CD4-positive, alpha-beta T cell (primary cell): ENCODE measurements at regions of chr15 and their contacts with region 1.

Region 1: GRCh38 chr15:70362886-70363285 is 265.2 kb upstream of the TLE3 start:
- DNase-seq: peak in 1 of 14 experiments; percentile 19
- ATAC-seq: no peak
- H3K4me3 ChIP-seq: no peak overlapping the region
- H3K4me3 Mint-ChIP-seq: no peak overlapping the region
- H3K27ac ChIP-seq: no peak overlapping the region
- H3K27ac Mint-ChIP-seq: no peak overlapping the region
- H3K4me1 ChIP-seq: peaks cover 3% of the 10 kb centered on the region
- H3K4me1 Mint-ChIP-seq: no peaks in the 10 kb centered on the region
- H3K27me3 ChIP-seq: peaks cover 2 to 5% of the 10 kb centered on the region in 2 experiments
- H3K27me3 Mint-ChIP-seq: peaks cover 13% of the 10 kb centered on the region
- CTCF ChIP-seq: no peak

Region 2: DNA sequence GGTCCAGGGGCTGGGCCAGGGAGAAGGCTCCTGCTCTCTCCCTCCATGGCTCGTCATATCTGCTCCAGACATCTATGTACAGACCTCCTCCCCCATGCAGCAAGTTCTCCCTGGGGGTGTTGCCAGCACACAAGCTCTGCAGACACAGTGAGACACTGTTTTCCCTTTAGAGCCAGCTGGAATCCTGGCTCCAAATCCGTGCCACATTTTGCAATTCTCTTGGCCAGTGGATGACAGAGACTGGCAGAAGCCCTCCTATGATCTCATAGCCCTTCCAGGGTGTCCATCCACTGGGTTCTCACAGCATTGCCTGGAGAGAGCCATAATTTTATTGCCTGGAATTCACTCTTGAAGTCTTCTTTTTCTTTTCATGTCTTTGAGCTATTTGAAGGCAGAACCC is 469.0 kb before region 1 on chr15:
- CTCF ChIA-PET with region 1: no interaction called
- POLR2A ChIA-PET with region 1: no interaction called
- intact Hi-C with region 1: no loop called
- DNase-seq: no peak
- ATAC-seq: no peak
- H3K4me3 ChIP-seq: no peak overlapping the region
- H3K4me3 Mint-ChIP-seq: no peak overlapping the region
- H3K27ac ChIP-seq: no peak overlapping the region
- H3K27ac Mint-ChIP-seq: no peak overlapping the region
- H3K4me1 ChIP-seq: no peaks in the 10 kb centered on the region
- H3K4me1 Mint-ChIP-seq: no peaks in the 10 kb centered on the region
- H3K27me3 ChIP-seq: peaks cover 5 to 7% of the 10 kb centered on the region in 2 experiments
- H3K27me3 Mint-ChIP-seq: peaks cover 7% of the 10 kb centered on the region
- CTCF ChIP-seq: no peak

Region 3: DNA sequence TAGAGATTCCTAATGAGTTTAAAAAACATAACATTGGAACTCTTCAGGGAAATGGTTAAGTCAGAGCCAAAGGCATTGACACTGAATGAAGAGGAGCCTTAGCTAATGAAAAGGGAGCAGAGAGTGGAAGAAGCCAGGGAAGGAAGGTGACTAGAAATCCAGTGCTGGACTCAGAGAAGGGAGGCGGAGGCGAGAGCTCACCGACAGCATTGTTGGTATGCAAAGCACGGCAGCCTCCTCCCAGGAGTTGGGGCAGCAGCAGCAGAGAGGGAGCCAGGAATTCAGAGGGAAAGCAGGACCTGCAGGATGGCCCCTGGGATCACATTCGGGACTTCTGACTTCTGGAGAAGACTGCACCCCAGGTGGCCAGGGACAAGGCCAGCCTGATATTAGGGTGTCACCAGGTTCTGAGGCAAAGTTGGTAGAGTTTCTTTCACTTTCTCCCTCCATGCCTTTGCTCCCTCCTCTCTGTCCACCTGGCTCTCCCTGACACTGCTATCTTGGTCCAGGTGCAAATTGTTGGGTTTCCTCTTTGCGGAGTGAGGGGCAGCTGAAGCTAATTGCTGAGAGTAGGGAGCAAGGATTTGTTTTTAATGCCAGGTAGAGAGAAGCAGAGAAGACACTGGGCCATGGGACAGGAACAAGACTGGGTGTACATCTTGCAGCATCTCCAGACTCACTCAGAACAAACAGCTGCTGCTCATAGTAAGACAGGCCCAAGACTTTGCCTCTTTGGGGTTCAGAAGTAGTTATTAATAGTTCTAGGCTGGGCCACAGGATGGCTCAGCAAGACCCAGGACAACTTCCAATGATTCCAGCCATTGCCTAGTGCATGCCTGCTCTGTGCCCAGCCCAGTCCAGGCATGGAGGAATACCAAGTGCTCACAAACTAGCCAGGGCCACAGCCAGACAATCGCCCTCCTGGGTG is 423.1 kb before region 1 on chr15:
- CTCF ChIA-PET with region 1: no interaction called
- POLR2A ChIA-PET with region 1: no interaction called
- intact Hi-C with region 1: no loop called
- DNase-seq: no peak
- ATAC-seq: no peak
- H3K4me3 ChIP-seq: no peak overlapping the region
- H3K4me3 Mint-ChIP-seq: no peak overlapping the region
- H3K27ac ChIP-seq: no peak overlapping the region
- H3K27ac Mint-ChIP-seq: no peak overlapping the region
- H3K4me1 ChIP-seq: no peaks in the 10 kb centered on the region
- H3K4me1 Mint-ChIP-seq: no peaks in the 10 kb centered on the region
- H3K27me3 ChIP-seq: peaks cover 0 to under 1% of the 10 kb centered on the region in 2 experiments
- H3K27me3 Mint-ChIP-seq: peaks cover 4% of the 10 kb centered on the region
- CTCF ChIP-seq: no peak

Region 4: DNA sequence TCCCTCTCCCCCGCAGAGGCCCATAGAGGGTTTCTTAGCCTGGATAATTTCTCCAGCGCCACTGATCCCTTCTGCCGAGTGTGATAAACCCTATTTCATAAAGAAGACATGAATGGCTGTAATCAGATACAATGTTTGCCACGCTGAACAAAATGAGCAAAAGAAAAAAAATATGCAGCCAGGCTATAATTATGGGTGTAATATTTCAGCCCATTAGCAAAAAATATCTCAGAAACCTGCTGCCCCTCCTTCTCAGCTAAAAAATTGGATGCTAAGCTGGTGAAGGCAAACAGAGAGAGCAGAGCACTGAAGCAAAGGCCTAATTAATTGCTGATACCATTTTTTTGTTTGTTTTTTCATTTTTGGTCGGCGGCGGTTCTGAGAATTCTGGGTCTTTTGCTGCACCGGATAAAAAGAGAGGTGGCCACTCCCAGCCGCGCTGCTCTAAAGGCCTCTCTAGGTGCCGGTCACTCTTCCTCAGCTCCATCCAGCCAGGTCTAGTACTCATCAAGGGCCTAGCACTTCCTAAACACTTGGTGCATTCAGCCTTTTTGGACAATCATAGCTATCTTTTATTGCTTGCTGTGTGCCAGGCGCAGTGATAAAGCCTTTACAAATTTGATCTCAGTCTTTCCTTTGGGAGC is 136.4 kb before region 1 on chr15:
- CTCF ChIA-PET with region 1: no interaction called
- POLR2A ChIA-PET with region 1: no interaction called
- intact Hi-C with region 1: loop called in 1 of 2 experiments (anchors 10 kb)
- DNase-seq: no peak
- ATAC-seq: no peak
- H3K4me3 ChIP-seq: no peak overlapping the region
- H3K4me3 Mint-ChIP-seq: no peak overlapping the region
- H3K27ac ChIP-seq: no peak overlapping the region
- H3K27ac Mint-ChIP-seq: no peak overlapping the region
- H3K4me1 ChIP-seq: no peaks in the 10 kb centered on the region
- H3K4me1 Mint-ChIP-seq: peaks cover 12% of the 10 kb centered on the region
- H3K27me3 ChIP-seq: no peaks in the 10 kb centered on the region
- H3K27me3 Mint-ChIP-seq: no peaks in the 10 kb centered on the region
- CTCF ChIP-seq: no peak